A673 (cell line): ENCODE measurements at regions of chr16 and their contacts with region 1.

Region 1: DNA sequence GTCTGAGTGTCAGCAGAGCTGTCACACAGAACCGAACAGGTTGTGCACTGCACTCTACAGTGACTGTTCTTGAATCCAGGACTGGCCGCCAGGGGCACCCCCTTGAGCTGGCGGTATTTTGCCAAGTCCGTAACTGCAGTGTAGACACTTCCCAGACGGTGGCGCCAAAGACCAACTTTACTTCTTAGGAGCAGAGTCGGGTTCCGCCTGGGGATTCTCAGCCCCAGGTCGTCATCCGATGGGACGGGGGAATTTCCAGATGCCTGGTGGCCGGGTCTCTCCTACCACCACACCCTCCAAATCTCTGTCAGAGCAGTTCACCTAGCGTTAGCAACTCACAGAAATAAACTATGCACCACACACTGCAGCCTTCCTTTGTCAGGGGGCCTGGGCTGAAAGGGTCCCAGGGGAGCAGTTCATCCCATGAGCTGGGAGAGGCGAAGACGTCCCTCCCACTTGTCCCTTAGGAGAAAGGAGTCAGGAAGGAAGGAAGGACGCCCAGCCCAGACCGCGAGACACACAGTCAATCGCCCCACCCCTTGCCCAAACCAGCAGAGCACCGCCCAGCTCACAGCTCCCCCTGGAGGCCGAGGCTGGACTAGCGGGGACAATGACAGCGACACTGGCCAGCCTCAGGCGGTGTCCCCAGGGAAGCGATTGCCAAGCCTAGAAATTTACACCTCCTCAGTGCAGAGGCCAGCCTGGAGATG is 7.4 kb upstream of the RIPOR1 start:
- DNase-seq: peak; percentile 98
- H3K4me3 ChIP-seq: peak overlapping the region; percentile 47
- H3K27ac ChIP-seq: peak overlapping the region; percentile 72
- H3K4me1 ChIP-seq: no peaks in the 10 kb centered on the region
- H3K27me3 ChIP-seq: no peaks in the 10 kb centered on the region
- CTCF ChIP-seq: peak; percentile 76

Region 2: DNA sequence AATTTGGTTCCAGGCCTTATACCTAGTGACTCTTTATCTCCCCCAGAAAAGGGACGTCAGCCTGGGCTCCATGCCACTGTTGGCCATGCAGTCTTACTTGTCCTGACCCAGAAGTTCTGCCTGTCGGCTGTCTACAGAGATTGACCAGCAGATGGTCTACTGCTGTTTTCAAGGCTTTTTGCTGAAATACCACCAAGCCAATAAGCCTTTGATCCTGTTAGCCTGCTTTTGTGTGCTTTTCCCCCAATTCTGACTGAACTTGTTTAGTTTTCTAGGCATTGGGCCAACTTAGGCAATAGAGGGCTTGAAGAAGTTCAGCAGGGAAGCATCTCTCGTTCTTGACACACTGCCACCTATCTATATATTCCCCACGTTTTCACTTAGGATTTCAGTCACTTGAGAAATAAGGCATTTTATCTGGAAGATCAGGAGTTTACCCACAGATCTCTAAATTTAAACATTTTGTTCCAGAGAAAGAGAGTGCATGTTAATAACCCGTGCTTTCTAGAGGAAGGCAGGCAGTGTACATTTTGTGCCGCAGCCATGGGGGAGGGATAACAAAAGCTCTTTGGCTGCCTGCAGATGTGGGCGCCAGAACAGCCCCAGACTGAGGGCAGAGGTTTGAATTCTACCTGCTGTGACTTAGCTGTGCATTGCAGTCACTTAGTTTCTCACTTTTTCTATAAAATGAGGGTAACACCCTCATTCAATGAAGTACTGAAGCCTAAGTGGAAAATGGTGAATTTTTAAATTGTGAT is 111.3 kb after region 1 on chr16:
- CTCF ChIA-PET with region 1: interaction called, 12 read pairs
- POLR2A ChIA-PET with region 1: no interaction called
- intact Hi-C with region 1: no loop called
- DNase-seq: peak; percentile 94
- H3K4me3 ChIP-seq: no peak overlapping the region
- H3K27ac ChIP-seq: peak overlapping the region; percentile 65
- H3K4me1 ChIP-seq: peaks cover 18% of the 10 kb centered on the region
- H3K27me3 ChIP-seq: no peaks in the 10 kb centered on the region
- CTCF ChIP-seq: peak; percentile 45; the same call in 1 of the 2 replicates

Region 3: DNA sequence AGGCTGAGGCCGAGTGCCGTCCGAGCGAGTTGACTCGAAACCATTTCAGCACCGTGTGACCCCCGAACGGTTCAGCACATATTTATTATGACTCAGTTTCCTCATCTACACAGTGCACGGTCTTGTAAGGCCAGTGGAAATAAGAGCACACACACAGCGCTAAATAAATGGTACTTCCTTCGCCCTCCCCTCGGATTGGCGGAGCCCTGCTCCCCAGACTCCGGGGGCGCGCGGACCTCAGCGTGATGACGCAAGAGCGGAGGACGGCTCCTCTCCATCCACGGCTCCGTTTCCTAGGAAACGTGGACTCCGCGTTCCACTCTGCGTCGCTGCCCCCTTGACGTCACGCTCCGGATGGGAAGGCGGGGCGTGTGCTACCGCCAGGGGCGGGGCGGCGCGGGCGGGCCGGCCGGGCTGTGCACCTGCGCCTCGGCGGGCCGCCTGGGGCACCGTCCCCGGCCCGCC is 139.3 kb after region 1 on chr16 and contains the start of gene PARD6A:
- CTCF ChIA-PET with region 1: interaction called, 17 read pairs
- POLR2A ChIA-PET with region 1: no interaction called
- intact Hi-C with region 1: no loop called
- DNase-seq: peak; percentile 99
- H3K4me3 ChIP-seq: peak within 1 kb of the TSS; percentile 66
- H3K27ac ChIP-seq: peak within 1 kb of the TSS; percentile 86
- H3K4me1 ChIP-seq: peaks cover 12% of the 10 kb centered on the region
- H3K27me3 ChIP-seq: no peaks in the 10 kb centered on the region
- CTCF ChIP-seq: no peak
- total RNA-seq, gene PARD6A: 8.6 and 8.7 TPM in 2 replicates

Region 4: DNA sequence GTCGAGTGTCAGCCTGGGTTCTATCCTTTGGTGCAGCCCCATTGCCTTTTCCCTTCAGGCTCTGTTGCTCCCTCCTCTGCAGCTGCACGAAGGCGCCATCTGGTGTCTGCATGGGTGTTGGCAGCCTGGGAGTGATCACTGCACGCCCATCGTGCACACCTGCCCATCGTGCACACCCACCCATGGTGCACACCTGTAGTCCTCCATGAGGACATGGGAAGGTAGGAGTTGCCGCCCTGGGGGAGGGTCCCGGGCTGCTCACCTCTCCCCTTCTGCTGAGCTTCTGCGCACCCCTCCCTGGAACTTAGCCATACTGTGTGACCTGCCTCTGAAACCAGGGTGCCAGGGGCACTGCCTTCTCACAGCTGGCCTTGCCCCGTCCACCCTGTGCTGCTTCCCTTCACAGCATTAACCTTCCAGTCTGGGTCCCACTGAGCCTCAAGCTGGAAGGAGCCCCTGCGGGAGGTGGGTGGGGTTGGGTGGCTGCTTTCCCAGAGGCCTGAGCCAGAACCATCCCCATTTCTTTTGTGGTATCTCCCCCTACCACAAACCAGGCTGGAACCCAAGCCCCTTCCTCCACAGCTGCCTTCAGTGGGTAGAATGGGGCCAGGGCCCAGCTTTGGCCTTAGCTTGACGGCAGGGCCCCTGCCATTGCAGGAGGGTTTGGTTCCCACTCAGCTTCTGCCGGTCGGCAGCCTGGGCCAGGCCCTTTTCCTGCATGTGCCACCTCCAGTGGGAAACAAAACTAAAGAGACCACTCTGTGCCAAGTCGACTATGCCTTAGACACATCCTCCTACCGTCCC is 407.5 kb after region 1 on chr16:
- CTCF ChIA-PET with region 1: interaction called, 8 read pairs
- POLR2A ChIA-PET with region 1: no interaction called
- intact Hi-C with region 1: loop called (anchors 5 kb)
- DNase-seq: peak; percentile 81
- H3K4me3 ChIP-seq: no peak overlapping the region
- H3K27ac ChIP-seq: no peak overlapping the region
- H3K4me1 ChIP-seq: peaks cover 22% of the 10 kb centered on the region
- H3K27me3 ChIP-seq: no peaks in the 10 kb centered on the region
- CTCF ChIP-seq: peak; percentile 94